Activated CD4-positive, alpha-beta memory T cell treated with anti-CD3 and anti-CD28 coated beads, Interleukin-2, amount 10 ng/mL, durations not matched to agents 7 days and 5 days (primary cell): ENCODE measurements at regions of chr4 and their contacts with region 1.

Region 1: DNA sequence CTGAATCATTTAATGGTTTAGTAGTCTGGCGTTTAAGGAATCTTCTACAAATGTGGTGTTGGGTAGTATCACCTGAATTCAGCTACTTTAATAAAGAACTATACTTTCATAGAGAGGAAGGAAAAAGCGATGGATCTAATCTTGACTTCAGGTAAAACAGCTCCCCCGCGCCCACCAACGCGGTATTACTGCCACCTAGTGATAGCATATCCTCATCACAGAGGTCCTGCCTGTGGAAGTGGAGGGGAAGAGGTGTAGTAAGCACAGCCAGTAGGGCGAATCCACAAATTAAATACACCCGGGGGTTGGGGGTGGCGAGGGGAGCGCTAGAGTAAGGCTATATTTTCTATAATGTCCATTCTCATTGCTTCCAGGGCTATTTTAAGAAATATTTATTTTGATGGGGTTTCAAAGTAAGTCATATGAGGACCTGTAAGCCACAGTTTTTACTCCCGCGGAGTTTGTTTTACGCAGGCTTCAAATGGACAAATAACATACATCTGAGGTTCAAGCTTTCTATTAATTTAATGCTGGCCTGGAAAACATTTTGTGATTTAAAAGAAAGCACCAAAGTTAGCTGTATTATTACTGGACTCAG is 8.3 kb upstream of the DAPP1 start:
- DNase-seq: peak; percentile 80
- H3K4me3 Mint-ChIP-seq: no peak overlapping the region
- H3K27ac Mint-ChIP-seq: no peak overlapping the region
- H3K4me1 Mint-ChIP-seq: peaks cover 25% of the 10 kb centered on the region
- H3K27me3 Mint-ChIP-seq: peaks cover 5% of the 10 kb centered on the region

Region 2: DNA sequence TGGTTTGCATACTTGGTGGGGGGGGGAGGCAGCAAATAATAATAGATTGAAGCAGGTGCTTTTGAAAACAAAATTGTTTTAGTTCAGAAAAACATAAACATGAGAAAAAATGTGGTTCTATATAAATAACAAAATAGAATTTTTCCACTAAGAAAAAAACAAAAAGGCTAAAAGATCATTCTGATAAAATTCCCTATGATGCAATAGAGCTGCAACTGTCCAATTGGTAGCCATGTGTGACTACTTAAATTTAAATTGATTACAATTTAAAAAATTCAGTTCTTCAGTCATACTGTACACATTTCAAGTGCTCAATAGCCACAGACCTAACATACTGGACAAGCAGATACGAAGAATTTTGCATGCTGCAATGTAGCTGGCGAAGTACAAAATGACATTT is 255.5 kb before region 1 on chr4:
- CTCF ChIA-PET with region 1: interaction called, 11 read pairs
- POLR2A ChIA-PET with region 1: no interaction called
- DNase-seq: no peak
- H3K4me3 Mint-ChIP-seq: no peak overlapping the region
- H3K27ac Mint-ChIP-seq: no peak overlapping the region
- H3K4me1 Mint-ChIP-seq: no peaks in the 10 kb centered on the region
- H3K27me3 Mint-ChIP-seq: no peaks in the 10 kb centered on the region

Region 3: DNA sequence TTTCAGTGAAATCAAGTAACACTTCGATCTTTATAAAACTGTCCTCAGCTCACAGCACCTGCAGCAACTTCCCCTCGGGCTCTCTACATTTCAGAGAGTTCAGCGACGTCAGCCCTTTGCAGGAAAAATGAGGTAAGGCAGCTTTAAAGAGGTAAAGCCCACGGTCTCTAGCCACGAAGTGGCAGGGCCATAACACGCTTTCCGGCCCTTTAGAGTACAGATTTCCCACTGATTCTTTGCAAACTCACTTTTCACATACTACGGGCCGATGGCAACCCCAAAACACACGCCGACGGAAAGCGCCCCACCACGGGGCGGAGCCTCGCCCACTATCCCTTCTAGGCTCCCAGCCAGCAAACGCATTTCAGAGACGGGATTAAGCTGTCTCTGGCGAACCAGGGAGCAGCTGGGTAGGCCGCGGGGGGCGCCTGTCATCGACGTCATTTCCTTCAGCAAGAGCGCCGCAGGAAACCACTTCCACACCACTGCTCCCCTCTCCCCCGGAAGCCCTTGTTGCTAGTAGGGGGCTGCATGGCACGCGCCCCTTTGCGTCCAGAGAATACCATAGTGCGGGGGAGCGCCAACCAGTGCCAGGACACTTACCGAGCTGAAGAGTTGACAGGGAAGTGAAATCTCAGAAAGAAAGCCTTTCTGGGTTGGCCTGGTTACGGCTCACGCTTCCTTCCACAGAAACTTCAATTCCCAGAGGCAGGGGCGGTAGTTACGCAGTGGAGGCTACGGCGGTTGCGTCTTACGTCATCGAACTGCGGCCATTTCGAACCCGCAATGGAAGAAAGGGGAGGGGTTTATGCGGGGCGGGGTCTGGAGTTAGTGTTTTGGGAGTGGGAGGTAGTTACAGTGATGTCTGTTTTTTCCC is 244.8 kb before region 1 on chr4 and contains the start of gene TRMT10A:
- CTCF ChIA-PET with region 1: interaction called, 46 read pairs
- POLR2A ChIA-PET with region 1: interaction called, 8 read pairs
- DNase-seq: peak; percentile 95
- H3K4me3 Mint-ChIP-seq: peak within 1 kb of the TSS; percentile 94
- H3K27ac Mint-ChIP-seq: peak within 1 kb of the TSS; percentile 99
- H3K4me1 Mint-ChIP-seq: peaks cover 31% of the 10 kb centered on the region
- H3K27me3 Mint-ChIP-seq: peaks cover 13% of the 10 kb centered on the region
- total RNA-seq, gene TRMT10A: 8.5 to 10.4 TPM

Region 4: GRCh38 chr4:99735822-99736221 is 72.5 kb before region 1 on chr4:
- CTCF ChIA-PET with region 1: no interaction called
- POLR2A ChIA-PET with region 1: no interaction called
- DNase-seq: no peak
- H3K4me3 Mint-ChIP-seq: no peak overlapping the region
- H3K27ac Mint-ChIP-seq: no peak overlapping the region
- H3K4me1 Mint-ChIP-seq: no peaks in the 10 kb centered on the region
- H3K27me3 Mint-ChIP-seq: peaks cover 9% of the 10 kb centered on the region

Region 5: DNA sequence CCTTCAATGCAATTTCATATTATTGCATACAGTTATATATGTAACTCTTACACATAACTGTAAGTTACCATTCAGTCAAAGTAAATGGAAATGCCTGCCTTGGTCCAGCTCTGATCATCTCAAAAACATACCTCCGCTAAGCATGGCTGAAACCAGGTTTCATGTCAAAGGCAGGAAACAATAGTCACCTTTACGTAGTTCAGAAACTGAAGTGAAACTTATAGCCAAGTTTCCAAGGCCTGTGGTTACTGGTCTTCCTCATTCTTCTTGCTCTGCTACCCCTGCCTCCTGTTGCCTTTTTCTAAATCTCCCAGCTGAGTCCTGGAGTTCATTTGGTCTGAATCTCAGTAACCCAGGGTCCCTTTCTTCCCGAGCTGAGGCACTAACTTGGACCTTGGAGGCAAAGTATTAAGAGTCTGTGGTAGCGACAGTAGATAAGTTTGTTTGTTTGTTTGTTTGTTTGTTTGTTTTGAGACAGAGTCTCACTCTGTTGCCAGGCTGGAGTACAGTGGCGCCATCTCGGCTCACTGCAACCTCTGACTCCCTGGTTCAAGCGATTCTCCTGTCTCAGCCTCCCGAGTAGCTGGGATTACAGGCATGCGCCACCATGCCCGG is 39.1 kb after region 1 on chr4:
- CTCF ChIA-PET with region 1: interaction called, 10 read pairs
- POLR2A ChIA-PET with region 1: interaction called, 5 read pairs
- DNase-seq: peak; percentile 34
- H3K4me3 Mint-ChIP-seq: peak overlapping the region; percentile 63
- H3K27ac Mint-ChIP-seq: peak overlapping the region; percentile 96
- H3K4me1 Mint-ChIP-seq: peaks cover 70% of the 10 kb centered on the region
- H3K27me3 Mint-ChIP-seq: no peaks in the 10 kb centered on the region

Region 6: DNA sequence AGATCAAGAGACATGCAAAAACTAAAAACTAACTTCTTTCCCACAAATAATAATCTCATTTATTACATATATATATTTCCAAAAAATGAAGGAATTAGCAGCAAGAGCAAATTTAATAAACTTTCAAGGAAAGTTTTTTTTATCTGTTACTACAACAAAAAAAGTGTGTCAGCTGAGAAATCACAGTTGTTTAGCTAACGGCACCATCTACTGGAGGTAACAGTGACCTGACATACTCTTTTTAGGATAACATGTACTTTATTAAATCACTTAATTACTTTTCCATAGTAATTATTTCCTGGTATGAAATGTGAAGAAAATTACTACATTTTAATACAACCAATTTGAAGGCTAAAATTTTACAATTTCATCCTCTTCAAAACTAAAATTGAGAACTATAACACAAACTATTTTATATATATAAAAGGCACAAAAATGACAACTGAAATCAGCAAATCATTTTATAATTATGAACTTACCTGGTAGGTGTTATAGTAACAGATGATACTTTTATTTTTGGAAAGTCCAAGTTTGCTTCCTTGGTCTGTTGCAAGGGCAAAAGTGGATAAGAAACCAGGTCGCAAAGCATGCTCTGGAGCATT is 76.8 kb after region 1 on chr4:
- CTCF ChIA-PET with region 1: interaction called, 43 read pairs
- POLR2A ChIA-PET with region 1: interaction called, 6 read pairs
- DNase-seq: peak; percentile 28
- H3K4me3 Mint-ChIP-seq: no peak overlapping the region
- H3K27ac Mint-ChIP-seq: no peak overlapping the region
- H3K4me1 Mint-ChIP-seq: peaks cover 4% of the 10 kb centered on the region
- H3K27me3 Mint-ChIP-seq: no peaks in the 10 kb centered on the region

Region 7: DNA sequence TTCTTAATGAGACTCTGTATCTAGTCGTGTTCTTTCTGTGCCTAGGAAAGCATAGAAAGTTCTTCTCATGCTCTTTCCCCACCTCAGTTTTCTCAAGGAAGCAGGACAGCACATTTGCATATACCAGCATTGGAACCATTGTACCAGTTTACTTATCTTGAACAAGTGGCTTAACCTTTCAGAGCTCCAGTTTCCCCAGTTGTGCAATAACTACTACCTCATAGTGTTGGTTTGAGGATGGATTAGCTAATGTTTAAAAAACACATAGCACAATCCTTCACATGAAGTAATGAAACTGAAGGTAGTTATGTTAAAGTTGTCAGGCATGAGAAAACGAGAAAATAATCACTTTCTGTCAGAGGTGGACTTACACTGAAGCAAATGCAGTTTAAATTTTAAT is 233.9 kb after region 1 on chr4:
- CTCF ChIA-PET with region 1: no interaction called
- POLR2A ChIA-PET with region 1: no interaction called
- DNase-seq: no peak
- H3K4me3 Mint-ChIP-seq: no peak overlapping the region
- H3K27ac Mint-ChIP-seq: no peak overlapping the region
- H3K4me1 Mint-ChIP-seq: no peaks in the 10 kb centered on the region
- H3K27me3 Mint-ChIP-seq: peaks cover 3% of the 10 kb centered on the region